ENCODE measurements at regions of chr11 and their contacts with region 1.

Region 1: GRCh38 chr11:44538375-44539054 is 26.9 kb upstream of the CD82 start:
- DNase-seq: peak; percentile 71
- H3K4me3 Mint-ChIP-seq: no peak overlapping the region
- H3K27ac Mint-ChIP-seq: no peak overlapping the region
- H3K4me1 Mint-ChIP-seq: no peaks in the 10 kb centered on the region
- H3K27me3 Mint-ChIP-seq: peaks cover 10% of the 10 kb centered on the region
- CTCF ChIP-seq: peak; percentile 93

Region 2: DNA sequence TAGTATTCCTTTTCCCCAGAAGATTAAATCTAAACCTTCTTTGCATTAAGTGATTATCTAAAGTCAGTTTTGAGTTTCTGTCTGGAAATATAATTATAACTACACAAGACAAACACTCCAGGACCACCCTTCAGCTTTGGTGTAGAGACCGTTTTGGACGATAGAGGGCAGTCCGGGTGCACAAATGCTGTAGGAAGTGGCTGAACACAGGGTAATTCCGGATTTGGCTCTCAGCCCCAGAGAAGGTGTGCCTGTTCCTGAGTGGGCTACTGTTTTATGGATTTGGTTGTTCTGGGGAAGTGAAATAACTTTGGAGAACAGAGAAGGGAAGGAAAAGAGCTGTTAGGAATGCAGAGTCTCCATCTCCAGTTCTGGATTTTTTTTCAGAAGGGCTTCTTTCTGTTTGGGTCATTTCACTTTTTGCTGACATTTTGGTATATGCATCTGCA is 428.3 kb before region 1 on chr11:
- CTCF ChIA-PET with region 1: interaction called, 3 read pairs
- POLR2A ChIA-PET with region 1: no interaction called
- intact Hi-C with region 1: loop called (anchors 5 kb)
- DNase-seq: peak; percentile 56
- H3K4me3 Mint-ChIP-seq: no peak overlapping the region
- H3K27ac Mint-ChIP-seq: no peak overlapping the region
- H3K4me1 Mint-ChIP-seq: peaks cover 13% of the 10 kb centered on the region
- H3K27me3 Mint-ChIP-seq: no peaks in the 10 kb centered on the region
- CTCF ChIP-seq: peak; percentile 61

Region 3: DNA sequence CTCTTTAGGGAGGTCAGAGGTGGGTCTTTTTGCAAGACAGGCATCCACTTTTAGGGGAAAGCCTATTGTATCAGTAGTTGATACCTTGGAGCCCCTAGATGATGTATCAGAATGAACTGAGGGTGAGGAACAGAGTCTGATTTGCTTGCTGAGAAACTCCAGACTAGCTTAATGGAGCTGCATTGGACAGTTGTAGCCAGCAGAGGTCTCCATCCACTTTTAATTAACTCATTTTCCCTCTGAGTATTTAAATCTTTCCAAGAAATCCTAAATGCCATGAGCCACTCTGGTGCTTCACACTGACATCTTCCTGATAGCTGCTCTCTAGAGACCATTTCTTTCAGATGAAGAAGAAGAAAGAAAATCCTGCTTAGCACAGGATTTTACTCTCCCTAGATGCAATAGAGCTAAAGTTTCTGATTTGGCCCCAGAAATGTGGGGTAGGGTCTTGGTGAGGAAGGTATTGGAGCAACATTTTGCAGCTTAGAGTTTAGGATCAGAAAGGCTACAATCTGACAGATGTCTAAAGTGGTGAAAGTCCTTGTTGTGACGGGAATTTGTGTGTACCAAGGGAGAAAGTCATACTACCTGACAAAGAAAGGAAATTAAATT is 405.1 kb before region 1 on chr11:
- CTCF ChIA-PET with region 1: interaction called, 25 read pairs
- POLR2A ChIA-PET with region 1: no interaction called
- intact Hi-C with region 1: loop called (anchors 1 kb)
- DNase-seq: peak; percentile 33
- H3K4me3 Mint-ChIP-seq: no peak overlapping the region
- H3K27ac Mint-ChIP-seq: no peak overlapping the region
- H3K4me1 Mint-ChIP-seq: peaks cover 6% of the 10 kb centered on the region
- H3K27me3 Mint-ChIP-seq: no peaks in the 10 kb centered on the region
- CTCF ChIP-seq: peak; percentile 41

Region 4: GRCh38 chr11:44277196-44278090 is 261.1 kb before region 1 on chr11:
- CTCF ChIA-PET with region 1: interaction called, 11 read pairs
- POLR2A ChIA-PET with region 1: interaction called, 3 read pairs
- intact Hi-C with region 1: no loop called
- DNase-seq: no peak
- H3K4me3 Mint-ChIP-seq: no peak overlapping the region
- H3K27ac Mint-ChIP-seq: no peak overlapping the region
- H3K4me1 Mint-ChIP-seq: no peaks in the 10 kb centered on the region
- H3K27me3 Mint-ChIP-seq: peaks cover 17% of the 10 kb centered on the region
- CTCF ChIP-seq: no peak

Region 5: GRCh38 chr11:44524751-44525201 is 13.7 kb before region 1 on chr11:
- CTCF ChIA-PET with region 1: interaction called, 10 read pairs
- POLR2A ChIA-PET with region 1: no interaction called
- intact Hi-C with region 1: no loop called
- DNase-seq: no peak
- H3K4me3 Mint-ChIP-seq: no peak overlapping the region
- H3K27ac Mint-ChIP-seq: no peak overlapping the region
- H3K4me1 Mint-ChIP-seq: peaks cover 6% of the 10 kb centered on the region
- H3K27me3 Mint-ChIP-seq: no peaks in the 10 kb centered on the region
- CTCF ChIP-seq: no peak

Region 6: DNA sequence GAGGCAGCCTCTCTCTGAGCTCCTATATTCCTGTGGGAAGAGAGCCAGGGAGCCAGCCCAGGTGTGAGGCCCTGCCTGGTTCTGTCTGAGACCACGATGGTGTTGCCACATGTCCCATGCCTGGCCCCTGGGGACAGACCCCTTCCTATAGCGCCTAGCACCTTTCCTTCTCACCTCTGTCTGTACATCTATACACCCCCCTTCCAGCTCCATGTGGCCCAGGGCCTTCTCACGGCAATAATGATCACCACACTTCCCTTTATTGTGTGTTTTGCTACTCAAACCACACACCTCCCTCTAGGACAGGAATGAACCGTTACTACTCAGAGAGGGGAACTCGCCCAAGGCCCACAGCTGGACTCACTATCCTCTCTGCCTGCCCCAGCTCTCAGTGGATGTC is 39.8 kb after region 1 on chr11:
- CTCF ChIA-PET with region 1: no interaction called
- POLR2A ChIA-PET with region 1: no interaction called
- intact Hi-C with region 1: no loop called
- DNase-seq: no peak
- H3K4me3 Mint-ChIP-seq: no peak overlapping the region
- H3K27ac Mint-ChIP-seq: no peak overlapping the region
- H3K4me1 Mint-ChIP-seq: peaks cover 21% of the 10 kb centered on the region
- H3K27me3 Mint-ChIP-seq: no peaks in the 10 kb centered on the region
- CTCF ChIP-seq: no peak

Region 7: DNA sequence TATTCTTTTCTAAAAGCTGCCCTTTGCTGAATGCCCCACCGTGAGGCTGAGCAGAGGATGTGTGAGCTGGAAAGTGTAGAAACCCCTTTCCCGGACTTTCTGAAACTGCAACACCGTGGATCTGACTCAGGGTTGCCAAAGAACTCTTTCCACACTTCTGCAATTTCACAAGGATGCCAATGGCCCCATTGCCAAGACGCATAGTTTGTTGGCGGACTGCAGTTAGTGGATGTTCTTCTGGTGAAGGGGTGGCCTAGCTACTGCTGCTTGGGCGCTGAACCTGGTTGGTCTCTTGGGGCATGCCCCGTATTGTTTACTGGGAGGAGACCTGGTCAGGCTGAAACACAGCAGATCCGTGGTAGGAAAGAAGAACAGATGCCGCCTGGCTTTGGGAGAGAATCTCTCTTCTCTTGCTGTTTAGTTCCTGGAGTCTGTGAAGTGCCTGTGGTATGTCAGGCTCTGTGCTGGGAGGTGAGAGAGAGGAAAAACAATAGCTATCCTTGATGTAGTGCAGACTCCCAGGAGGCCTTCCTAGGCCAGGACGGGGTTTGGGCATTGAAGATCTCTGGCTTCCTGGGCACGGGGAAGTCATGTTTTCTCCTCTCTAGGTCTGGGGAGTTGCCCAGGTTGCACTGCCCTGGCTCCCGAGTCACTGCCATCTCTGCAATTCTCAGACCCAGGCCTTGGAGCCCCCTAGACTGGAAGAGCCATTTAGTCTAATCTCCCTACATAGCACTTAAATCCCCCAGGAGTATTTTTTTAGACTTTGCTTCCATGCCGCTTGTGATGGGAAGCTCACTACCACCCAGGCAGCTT is 53.8 kb after region 1 on chr11:
- CTCF ChIA-PET with region 1: no interaction called
- POLR2A ChIA-PET with region 1: no interaction called
- intact Hi-C with region 1: no loop called
- DNase-seq: peak; percentile 65
- H3K4me3 Mint-ChIP-seq: no peak overlapping the region
- H3K27ac Mint-ChIP-seq: no peak overlapping the region
- H3K4me1 Mint-ChIP-seq: peaks cover 21% of the 10 kb centered on the region
- H3K27me3 Mint-ChIP-seq: no peaks in the 10 kb centered on the region
- CTCF ChIP-seq: no peak